ENCODE measurements at regions of chr13 and their contacts with region 1.

Region 1: DNA sequence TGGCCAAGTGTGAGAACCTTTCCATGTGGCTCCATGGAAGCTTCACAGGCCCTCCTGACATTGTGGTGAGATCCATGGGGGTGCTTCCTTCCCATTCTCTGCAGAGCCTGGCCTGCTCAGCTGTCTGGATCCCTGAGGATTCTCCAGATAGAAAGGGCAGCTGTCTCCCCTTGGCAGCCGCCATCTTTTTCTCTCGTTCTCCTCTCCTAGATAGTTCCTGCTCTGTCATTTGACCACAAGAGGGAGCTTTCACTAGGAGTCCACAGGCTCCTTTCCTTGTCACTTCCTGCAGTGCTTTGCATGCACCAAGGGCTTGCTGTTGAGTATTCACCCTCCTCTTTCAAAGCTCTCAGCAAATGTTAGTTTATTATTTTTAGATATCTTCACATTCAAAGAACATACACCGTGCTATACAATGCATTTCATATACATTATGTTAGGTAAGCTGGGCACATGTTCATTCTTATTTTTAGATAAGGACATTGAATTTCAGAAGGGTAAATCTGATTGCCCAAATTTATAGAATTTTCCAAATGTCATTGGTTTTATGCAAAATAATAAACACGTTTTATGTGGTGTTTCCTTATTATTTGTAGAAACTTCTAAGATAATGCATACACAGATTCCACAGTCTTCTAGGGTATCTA is 133.2 kb downstream of the FRY start:
- DNase-seq: peak; percentile 79
- ATAC-seq: peak; percentile 93
- H3K4me3 ChIP-seq: no peak overlapping the region
- H3K27ac ChIP-seq: no peak overlapping the region
- H3K4me1 ChIP-seq: peaks cover 12% of the 10 kb centered on the region; the same call in 1 of the 2 replicates
- H3K27me3 ChIP-seq: no peaks in the 10 kb centered on the region
- CTCF ChIP-seq: peak; percentile 75

Region 2: DNA sequence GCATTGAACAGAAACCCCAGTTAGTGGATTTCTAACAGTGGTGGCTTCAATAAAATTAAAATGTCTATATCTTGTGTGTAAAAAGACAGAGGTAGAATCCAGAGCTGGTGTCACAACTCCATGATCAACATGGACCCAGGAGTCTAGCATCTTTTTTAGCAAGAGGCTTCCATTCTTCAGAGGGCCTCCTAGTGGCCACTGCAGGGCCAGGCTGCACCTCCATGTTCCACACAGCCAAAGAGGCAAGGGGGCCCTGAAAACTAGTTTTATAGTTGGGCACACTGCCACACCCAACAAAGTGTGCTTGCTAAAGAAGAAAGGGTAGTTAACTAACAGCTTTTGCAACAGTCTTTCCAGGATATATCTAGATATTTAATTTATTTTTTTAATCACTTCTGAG is 250.3 kb after region 1 on chr13:
- CTCF ChIA-PET with region 1: interaction called, 4 read pairs
- POLR2A ChIA-PET with region 1: no interaction called
- intact Hi-C with region 1: loop called (anchors 10 kb)
- DNase-seq: peak; percentile 20
- ATAC-seq: no peak
- H3K4me3 ChIP-seq: no peak overlapping the region
- H3K27ac ChIP-seq: no peak overlapping the region
- H3K4me1 ChIP-seq: no peaks in the 10 kb centered on the region
- H3K27me3 ChIP-seq: no peaks in the 10 kb centered on the region
- CTCF ChIP-seq: peak; percentile 66

Measured in PC-3 (cell line).